Caco-2 (cell line): ENCODE measurements at regions of chr12 and their contacts with region 1.

Region 1: DNA sequence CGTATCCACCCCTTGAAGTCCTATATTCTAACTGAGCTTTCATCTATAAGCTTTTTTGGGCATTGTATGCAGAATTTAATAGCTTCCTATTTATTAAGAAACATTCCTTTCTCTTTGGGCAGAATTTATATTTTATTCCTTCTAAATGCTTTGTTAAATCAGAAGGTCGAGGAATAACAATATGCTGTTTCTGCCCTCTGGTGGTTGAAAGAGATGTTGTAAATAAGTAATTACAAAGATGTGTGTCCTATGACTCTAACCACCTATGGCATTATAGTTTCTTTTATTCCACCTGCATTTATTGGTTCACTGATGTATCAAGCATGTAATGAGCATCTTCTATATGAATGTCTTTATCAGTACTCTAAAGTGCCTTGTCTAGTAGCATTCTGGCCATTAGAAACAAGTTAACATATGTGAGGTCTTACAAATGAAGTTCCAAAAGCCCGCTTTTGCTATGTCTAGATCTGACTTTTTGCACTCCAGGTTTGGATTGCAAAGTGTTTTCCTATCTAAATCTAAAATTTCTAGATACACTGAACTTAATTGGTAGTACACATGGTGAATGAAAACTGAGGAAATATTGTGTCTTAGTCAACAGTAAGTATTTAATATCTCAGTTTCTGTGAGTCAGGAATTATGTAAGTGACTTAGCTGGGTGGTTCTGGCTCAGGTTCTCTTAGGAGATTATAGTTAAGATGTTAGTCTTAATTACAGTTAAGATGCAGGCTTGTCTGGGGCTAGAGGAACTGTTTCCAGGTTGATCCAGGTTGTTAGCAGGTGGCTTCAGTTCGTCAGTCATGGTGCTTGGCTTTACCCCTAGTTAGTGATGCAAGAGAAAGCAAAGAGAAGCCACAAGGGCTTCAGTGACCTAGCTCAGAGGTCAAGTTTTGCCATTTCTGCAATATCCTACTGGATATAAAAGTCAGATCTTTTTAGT is 57.5 kb downstream of the PLEKHA5 start:
- DNase-seq: peak in 1 of 2 experiments; percentile 50
- H3K4me3 ChIP-seq: no peak overlapping the region
- H3K4me3 Mint-ChIP-seq: no peak overlapping the region
- H3K27ac Mint-ChIP-seq: no peak overlapping the region
- H3K4me1 ChIP-seq: no peaks in the 10 kb centered on the region
- H3K4me1 Mint-ChIP-seq: peaks cover 15% of the 10 kb centered on the region
- H3K27me3 ChIP-seq: no peaks in the 10 kb centered on the region
- H3K27me3 Mint-ChIP-seq: no peaks in the 10 kb centered on the region
- CTCF ChIP-seq: peak; percentile 57 to 85

Region 2: DNA sequence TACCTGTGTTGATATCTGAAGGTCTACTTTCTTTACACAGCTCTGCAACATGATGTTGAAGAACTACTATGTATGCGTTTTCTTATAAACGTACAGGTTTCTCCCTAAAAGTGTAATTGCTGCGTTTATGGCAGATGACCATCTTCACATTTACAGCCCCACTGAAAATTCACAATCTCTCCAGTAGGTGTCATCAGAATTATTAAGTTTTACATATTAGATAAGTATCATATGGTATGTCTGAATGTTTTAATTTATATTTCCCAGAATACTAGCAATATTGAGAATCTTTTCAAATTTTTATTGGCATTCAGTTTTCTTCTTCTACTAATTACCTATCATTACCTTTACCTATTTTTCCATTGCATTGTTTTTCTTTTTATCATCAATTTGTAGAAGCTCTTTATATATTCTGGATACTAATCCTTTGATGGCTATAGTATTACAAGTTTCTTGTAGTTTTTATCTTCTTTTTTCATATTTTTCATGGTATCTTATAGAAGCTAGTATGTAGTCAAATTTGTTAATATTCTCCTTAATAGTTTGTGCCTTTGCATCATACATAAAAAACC is 325.6 kb before region 1 on chr12:
- CTCF ChIA-PET with region 1: no interaction called
- POLR2A ChIA-PET with region 1: no interaction called
- intact Hi-C with region 1: loop called (anchors 1 kb)
- DNase-seq: peak in 1 of 2 experiments; percentile 56
- H3K4me3 ChIP-seq: no peak overlapping the region
- H3K4me3 Mint-ChIP-seq: no peak overlapping the region
- H3K27ac Mint-ChIP-seq: no peak overlapping the region
- H3K4me1 ChIP-seq: no peaks in the 10 kb centered on the region
- H3K4me1 Mint-ChIP-seq: no peaks in the 10 kb centered on the region
- H3K27me3 ChIP-seq: no peaks in the 10 kb centered on the region; the same call in 1 of the 2 replicates
- H3K27me3 Mint-ChIP-seq: peaks cover 13% of the 10 kb centered on the region
- CTCF ChIP-seq: peak; percentile 66 to 92

Region 3: DNA sequence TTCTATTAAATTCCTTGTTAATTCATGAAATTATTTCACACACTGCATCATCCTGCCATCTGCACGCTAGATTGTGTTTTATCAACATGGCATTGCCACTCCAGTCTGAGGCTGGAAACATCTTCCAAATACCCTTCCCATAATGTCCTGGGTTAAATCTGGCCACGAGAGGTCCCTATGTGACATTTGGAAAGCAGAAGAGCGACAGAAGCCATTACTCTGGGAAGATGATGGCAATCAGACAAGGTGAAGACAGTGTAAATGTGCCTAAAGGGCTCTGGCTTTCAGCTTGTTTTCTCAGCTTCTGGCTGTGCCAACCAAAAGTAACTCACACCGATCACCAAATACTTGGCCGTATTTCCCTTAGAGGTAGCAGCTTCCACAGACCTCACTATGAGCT is 304.3 kb before region 1 on chr12:
- CTCF ChIA-PET with region 1: interaction called, 3 read pairs
- POLR2A ChIA-PET with region 1: no interaction called
- intact Hi-C with region 1: loop called (anchors 1 kb)
- DNase-seq: peak in 1 of 2 experiments; percentile 41
- H3K4me3 ChIP-seq: no peak overlapping the region
- H3K4me3 Mint-ChIP-seq: no peak overlapping the region
- H3K27ac Mint-ChIP-seq: no peak overlapping the region
- H3K4me1 ChIP-seq: no peaks in the 10 kb centered on the region
- H3K4me1 Mint-ChIP-seq: no peaks in the 10 kb centered on the region
- H3K27me3 ChIP-seq: no peaks in the 10 kb centered on the region
- H3K27me3 Mint-ChIP-seq: no peaks in the 10 kb centered on the region
- CTCF ChIP-seq: peak; percentile 33 to 50

Region 4: GRCh38 chr12:19144985-19145384 is 42.0 kb before region 1 on chr12:
- CTCF ChIA-PET with region 1: no interaction called
- POLR2A ChIA-PET with region 1: no interaction called
- intact Hi-C with region 1: loop called (anchors 2 kb)
- DNase-seq: peak; percentile 59 to 60
- H3K4me3 ChIP-seq: no peak overlapping the region
- H3K4me3 Mint-ChIP-seq: peak overlapping the region; percentile 30
- H3K27ac Mint-ChIP-seq: peak overlapping the region; percentile 28
- H3K4me1 ChIP-seq: peaks cover 32% of the 10 kb centered on the region
- H3K4me1 Mint-ChIP-seq: peaks cover 28% of the 10 kb centered on the region
- H3K27me3 ChIP-seq: no peaks in the 10 kb centered on the region
- H3K27me3 Mint-ChIP-seq: no peaks in the 10 kb centered on the region
- CTCF ChIP-seq: no peak

Region 5: GRCh38 chr12:19288603-19289244 is 101.7 kb after region 1 on chr12:
- CTCF ChIA-PET with region 1: no interaction called
- POLR2A ChIA-PET with region 1: interaction called, 3 read pairs
- intact Hi-C with region 1: loop called (anchors 5 kb)
- DNase-seq: peak in 1 of 2 experiments; percentile 30
- H3K4me3 ChIP-seq: no peak overlapping the region
- H3K4me3 Mint-ChIP-seq: no peak overlapping the region
- H3K27ac Mint-ChIP-seq: no peak overlapping the region
- H3K4me1 ChIP-seq: peaks cover 4% of the 10 kb centered on the region; the same call in 1 of the 2 replicates
- H3K4me1 Mint-ChIP-seq: no peaks in the 10 kb centered on the region
- H3K27me3 ChIP-seq: no peaks in the 10 kb centered on the region
- H3K27me3 Mint-ChIP-seq: no peaks in the 10 kb centered on the region
- CTCF ChIP-seq: peak; percentile 73 to 83